Sigmoid colon (tissue), 7 donors: ENCODE measurements at regions of chr1 and their contacts with region 1.

Region 1: DNA sequence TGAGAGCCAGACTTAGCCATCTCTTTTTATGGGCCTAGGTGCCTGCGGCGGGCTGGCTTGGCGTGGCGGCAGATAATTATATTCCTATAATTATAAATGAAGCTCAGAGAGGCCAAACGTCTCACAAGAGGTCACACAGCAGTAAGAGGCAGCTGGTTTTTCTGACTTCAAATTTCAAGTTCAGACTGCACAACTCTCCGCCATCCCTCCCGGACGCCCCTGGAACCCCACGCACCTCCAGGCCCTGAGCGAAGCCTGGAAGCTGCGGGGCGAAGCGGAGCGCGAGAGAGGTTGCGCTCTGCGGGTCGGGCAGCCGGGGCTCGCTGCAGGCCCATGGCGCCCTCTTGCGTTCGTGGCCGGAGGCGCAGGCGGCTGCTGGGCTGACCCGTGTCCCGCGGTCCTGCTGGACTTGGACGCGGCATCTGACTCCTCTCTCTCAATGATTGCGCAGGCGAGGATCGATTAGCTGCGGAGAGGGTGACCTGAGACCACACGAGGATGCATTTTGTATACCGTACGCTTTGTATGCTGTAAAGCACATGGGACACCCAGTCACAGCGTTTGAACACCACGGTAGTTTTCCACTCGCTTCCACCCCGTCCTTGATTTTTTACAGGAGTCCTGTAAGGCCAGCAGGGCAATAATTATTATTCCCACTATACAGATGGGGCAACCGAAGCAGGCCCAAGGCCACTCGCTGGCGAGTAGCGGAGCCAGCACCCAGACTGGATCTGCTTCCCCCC is 272.7 kb downstream of the FOXD2 start:
- DNase-seq: peak; percentile 84
- H3K4me3 ChIP-seq: peak overlapping the region in 3 of 4 donors; percentile 36 to 47 (median 45)
- H3K27ac ChIP-seq: no peak overlapping the region
- H3K4me1 ChIP-seq: peaks cover 0 to 28% (median 26%) of the 10 kb centered on the region in 4 donors
- H3K27me3 ChIP-seq: peaks cover 31 to 89% (median 40%) of the 10 kb centered on the region in 3 donors
- CTCF ChIP-seq: peak; percentile 80 to 100 (median 91)
- EP300 ChIP-seq: no peak
- POLR2A ChIP-seq: no peak

Region 2: DNA sequence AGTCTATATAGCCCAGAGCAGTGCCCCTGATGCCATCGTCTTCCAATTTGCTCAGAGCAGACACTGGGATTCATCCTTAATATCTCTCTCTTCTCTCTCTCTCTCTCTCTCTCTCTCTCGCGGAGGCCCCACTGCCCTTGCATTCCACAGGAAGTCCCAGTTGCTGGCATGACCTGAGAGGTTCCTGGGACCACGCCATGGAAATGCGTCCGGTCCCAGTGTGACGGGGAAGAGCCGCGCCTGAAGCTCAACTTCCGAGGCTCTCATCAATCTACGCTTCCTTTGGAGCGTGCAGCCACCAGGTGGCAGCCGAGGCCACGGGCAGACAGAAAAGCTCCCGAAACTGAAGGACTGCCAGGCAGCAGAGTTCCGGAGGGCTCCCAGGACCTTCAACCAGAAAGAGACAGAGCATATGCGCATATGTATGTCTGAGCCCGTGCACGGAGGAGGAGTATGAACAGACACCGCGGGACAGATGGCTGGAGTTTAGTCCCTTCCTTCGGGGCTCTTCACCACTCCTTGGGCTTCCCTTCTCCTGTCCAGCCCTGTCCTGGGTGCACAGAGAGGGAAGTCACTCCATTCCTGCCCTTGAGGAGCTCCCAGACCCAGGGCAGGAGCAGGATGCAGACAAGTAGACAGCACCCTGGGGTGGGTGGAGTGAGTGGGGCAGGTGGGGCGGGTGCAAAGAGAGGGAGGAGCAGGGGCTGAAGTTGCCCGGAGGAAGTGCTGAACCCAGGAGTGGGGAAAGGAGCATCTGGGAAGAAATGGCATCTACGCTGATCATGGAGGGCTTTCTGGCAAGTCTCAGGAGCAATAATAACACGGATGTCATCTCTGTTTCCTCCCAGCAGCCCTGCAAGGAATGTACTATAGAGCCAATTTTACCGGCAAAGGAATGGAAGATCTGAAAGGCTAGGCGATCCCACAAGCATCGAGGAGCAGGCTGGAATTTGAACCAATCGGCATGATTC is 531.2 kb before region 1 on chr1:
- intact Hi-C with region 1: loop called (anchors 2 kb)
- DNase-seq: peak; percentile 92
- H3K4me3 ChIP-seq: peak overlapping the region; percentile 18 to 47 (median 30)
- H3K27ac ChIP-seq: peak overlapping the region in 2 of 4 donors; percentile 19 to 55
- H3K4me1 ChIP-seq: peaks cover 0 to 14% (median 12%) of the 10 kb centered on the region in 4 donors
- H3K27me3 ChIP-seq: peaks cover 0 to 30% (median 2%) of the 10 kb centered on the region in 3 donors
- CTCF ChIP-seq: peak; percentile 69 to 89 (median 74)
- EP300 ChIP-seq: no peak
- POLR2A ChIP-seq: no peak

Region 3: GRCh38 chr1:47192458-47193384 is 517.8 kb before region 1 on chr1:
- intact Hi-C with region 1: loop called (anchors 5 kb)
- DNase-seq: peak; percentile 84
- H3K4me3 ChIP-seq: no peak overlapping the region
- H3K27ac ChIP-seq: no peak overlapping the region
- H3K4me1 ChIP-seq: peaks cover 0 to 21% (median 17%) of the 10 kb centered on the region in 4 donors
- H3K27me3 ChIP-seq: peaks cover 0 to 5% (median 0%) of the 10 kb centered on the region in 3 donors
- CTCF ChIP-seq: peak; percentile 58 to 90 (median 84)
- EP300 ChIP-seq: no peak
- POLR2A ChIP-seq: no peak

Region 4: GRCh38 chr1:47432071-47433036 is 278.1 kb before region 1 on chr1:
- intact Hi-C with region 1: loop called (anchors 1 kb)
- DNase-seq: peak; percentile 79
- H3K4me3 ChIP-seq: peak overlapping the region in 1 of 4 donors; percentile 1
- H3K27ac ChIP-seq: no peak overlapping the region
- H3K4me1 ChIP-seq: peaks cover 0 to 49% (median 43%) of the 10 kb centered on the region in 4 donors
- H3K27me3 ChIP-seq: peaks cover 55 to 100% (median 77%) of the 10 kb centered on the region in 3 donors
- CTCF ChIP-seq: peak in 3 of 4 experiments; percentile 43 to 64 (median 58)
- EP300 ChIP-seq: no peak
- POLR2A ChIP-seq: no peak

Region 5: DNA sequence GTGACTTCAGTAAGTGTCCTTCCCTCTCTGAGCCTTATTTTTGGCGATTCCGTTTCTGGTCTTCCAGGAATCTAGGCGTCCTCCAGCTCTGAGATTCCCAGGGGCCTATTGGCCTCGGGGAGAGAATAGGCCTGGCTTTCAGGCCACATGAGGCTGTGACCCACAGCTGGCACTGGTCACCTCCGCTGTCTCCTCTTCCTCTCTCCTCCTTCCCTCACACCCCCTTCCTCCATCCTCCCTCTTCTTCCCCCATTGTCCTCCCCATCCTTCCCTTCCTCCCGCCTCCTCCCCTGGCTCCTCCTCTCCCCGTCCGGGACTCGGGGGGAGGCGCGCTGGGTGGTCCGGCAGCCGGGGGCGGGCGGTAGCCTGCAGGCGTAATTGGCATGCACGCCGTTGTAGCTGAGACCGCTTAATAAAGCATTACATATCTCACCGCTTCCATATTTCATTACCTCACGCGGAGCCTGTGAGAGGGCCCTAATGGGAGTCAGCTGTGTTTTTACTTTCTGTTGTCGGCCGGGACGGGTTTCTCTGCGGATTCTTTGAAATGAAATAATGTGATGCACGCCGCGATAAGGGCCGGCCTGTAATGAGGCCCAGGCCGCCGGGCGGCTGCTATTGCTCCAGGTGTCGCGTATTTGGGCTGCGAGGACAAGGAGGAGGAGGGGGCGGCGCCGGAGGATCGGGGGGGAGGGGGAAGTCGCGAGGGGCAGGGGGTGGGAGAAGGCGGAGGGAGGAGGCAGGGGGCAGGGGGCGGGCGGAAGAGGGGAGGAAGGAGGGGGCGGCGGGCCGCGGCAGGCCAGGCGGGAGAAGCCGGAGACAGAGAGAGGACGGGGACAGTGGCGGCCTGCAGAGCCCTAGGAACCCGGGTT is 177.3 kb before region 1 on chr1:
- intact Hi-C with region 1: loop called (anchors 2 kb)
- DNase-seq: peak; percentile 76
- H3K4me3 ChIP-seq: peak overlapping the region; percentile 29 to 53 (median 50)
- H3K27ac ChIP-seq: peak overlapping the region in 3 of 4 donors; percentile 47 to 63 (median 58)
- H3K4me1 ChIP-seq: peaks cover 0 to 19% (median 14%) of the 10 kb centered on the region in 4 donors
- H3K27me3 ChIP-seq: no peaks in the 10 kb centered on the region
- CTCF ChIP-seq: no peak
- EP300 ChIP-seq: no peak
- POLR2A ChIP-seq: no peak